Adrenal gland (tissue), 19 donors: ENCODE measurements at regions of chrX and their contacts with region 1.

Region 1: DNA sequence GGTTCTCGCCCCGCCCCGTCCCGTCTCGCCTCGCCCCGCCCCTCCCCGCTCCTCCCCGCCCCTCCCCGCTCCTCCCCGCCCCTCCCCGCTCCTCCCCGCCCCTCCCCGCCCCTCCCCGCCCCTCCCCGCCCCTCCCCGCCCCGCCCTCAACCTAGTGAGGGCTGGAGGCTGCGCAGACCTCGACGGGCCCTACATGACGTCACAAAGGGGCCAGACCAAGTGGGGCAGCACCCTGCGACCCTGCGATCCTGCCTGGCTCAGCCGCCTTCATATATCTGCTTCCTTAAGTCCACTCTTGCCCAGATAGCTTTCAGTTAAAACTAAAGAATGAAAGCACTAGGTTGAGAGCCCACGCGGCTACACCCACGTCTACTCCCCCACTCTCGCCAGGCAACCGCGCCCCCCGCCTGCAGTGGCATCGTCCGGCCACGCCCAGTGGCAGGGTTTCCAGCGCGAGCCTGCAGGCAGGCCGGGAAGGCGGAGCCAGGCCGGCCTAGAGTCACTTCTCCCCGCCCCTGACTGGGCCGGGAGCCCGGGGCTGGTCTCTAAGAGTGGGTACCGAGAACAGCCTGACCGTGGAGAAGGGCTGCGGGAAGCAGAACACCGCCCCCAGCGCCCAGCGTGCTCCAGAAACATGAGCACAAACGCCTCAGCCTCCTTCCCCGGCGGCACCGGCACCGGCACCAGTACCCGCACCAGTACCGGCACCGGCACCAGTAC is 1.5 kb upstream of the MAOA start:
- DNase-seq: peak; percentile 91 to 96 (median 93)
- H3K4me3 ChIP-seq: peak overlapping the region in 2 of 4 donors; percentile 32 to 66
- H3K27ac ChIP-seq: peak overlapping the region in 4 of 5 donors; percentile 57 to 92 (median 80)
- H3K4me1 ChIP-seq: peaks cover 0 to 7% of the 10 kb centered on the region in 2 donors
- H3K27me3 ChIP-seq: no peaks in the 10 kb centered on the region
- CTCF ChIP-seq: peak in 4 of 6 experiments; percentile 4 to 36 (median 22)
- POLR2A ChIP-seq: peak; percentile 55 to 91

Region 2: GRCh38 chrX:43703211-43703791 is 48.7 kb after region 1 on chrX:
- intact Hi-C with region 1: loop called in 1 of 2 experiments (anchors 10 kb)
- DNase-seq: peak in 2 of 7 donors; percentile 3 to 51
- H3K4me3 ChIP-seq: no peak overlapping the region
- H3K27ac ChIP-seq: peak overlapping the region in 4 of 5 donors; percentile 62 to 85 (median 69)
- H3K4me1 ChIP-seq: peaks cover 9 to 27% of the 10 kb centered on the region in 2 donors
- H3K27me3 ChIP-seq: peaks cover 4% of the 10 kb centered on the region
- CTCF ChIP-seq: no peak
- POLR2A ChIP-seq: no peak

Region 3: DNA sequence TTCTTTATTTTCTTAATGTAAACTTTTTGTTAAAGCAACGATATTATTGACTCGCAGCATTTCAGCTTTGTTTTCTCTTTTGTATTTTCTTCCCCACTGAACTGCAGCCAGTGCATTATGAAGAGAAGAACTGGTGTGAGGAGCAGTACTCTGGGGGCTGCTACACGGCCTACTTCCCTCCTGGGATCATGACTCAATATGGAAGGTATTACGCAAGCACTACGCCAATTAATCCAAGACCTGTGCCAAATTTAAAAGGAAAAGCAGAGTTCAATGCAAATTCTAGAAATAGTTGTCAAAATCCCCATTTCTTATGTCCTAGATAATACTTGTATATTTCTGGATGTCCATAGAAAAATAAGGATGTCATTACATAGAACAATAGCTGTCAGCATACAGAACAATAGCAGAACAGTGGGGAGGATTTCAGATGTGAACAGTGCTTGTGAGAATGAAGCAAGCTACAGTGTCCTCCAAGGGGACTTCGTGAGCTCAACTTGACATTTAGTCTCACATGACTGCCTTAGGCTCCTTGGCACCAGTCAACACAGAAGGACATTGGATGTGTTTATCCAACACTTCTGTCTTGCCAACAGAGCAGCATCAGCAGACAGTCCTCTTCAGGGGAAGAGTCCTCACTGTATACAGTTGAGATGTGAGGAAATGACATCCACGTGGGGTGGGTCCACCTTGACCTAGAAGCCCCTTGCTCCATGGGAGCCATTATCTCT is 87.4 kb after region 1 on chrX:
- intact Hi-C with region 1: loop called in 1 of 2 experiments (anchors 10 kb)
- DNase-seq: peak in 4 of 7 donors; percentile 22 to 31 (median 28)
- H3K4me3 ChIP-seq: no peak overlapping the region
- H3K27ac ChIP-seq: peak overlapping the region in 2 of 5 donors; percentile 48 to 64
- H3K4me1 ChIP-seq: peaks cover 0 to 8% of the 10 kb centered on the region in 2 donors
- H3K27me3 ChIP-seq: peaks cover 1% of the 10 kb centered on the region
- CTCF ChIP-seq: no peak
- POLR2A ChIP-seq: no peak